ENCODE measurements at regions of chr7 and their contacts with region 1.

Region 1: DNA sequence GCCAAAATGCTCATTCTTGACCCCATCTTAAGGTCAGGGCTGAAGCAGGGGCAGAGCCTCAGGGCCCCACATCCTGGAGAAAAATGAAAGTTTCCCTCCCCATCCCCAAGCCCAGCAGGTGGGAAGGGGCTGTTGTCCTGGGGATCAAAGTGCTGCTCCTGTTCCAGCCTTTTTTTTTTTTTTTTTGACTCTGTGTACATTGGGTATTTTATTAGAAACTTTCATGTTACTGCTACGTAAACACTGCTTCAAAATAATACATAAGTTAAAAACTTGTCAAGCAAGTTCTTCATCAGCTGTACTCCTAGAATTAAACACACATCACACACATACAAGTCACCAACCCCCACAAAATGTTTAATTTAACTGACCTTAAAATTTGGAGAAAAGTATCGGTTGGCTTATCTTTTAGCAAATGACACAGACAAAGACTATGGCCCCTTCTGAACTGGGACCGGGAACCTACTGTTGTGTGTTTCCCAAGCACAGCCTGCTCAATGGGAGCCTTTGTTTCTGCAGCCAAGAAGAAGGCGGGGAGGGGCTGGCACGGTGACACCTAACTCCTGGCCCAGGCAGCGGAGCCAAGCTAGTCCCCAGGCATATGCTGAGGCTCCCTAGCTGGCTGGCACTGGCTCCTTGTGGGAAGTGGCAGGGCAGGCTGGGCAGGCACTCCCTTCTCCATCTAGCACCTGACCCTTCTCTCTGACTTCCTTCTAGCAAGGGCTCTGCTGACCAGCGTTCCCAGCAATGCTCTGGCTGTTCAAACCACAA is 325.2 kb downstream of the PLXNA4 start:
- DNase-seq: peak; percentile 50 to 90 (median 80)
- H3K4me3 ChIP-seq: peak overlapping the region in 4 of 59 donors; percentile 1 to 40 (median 11)
- H3K27ac ChIP-seq: peak overlapping the region in 10 of 59 donors; percentile 11 to 59 (median 28)
- H3K27me3 ChIP-seq: no peaks in the 10 kb centered on the region
- CTCF ChIP-seq: peak in 2 of 56 donors; percentile 8 to 22

Region 2: DNA sequence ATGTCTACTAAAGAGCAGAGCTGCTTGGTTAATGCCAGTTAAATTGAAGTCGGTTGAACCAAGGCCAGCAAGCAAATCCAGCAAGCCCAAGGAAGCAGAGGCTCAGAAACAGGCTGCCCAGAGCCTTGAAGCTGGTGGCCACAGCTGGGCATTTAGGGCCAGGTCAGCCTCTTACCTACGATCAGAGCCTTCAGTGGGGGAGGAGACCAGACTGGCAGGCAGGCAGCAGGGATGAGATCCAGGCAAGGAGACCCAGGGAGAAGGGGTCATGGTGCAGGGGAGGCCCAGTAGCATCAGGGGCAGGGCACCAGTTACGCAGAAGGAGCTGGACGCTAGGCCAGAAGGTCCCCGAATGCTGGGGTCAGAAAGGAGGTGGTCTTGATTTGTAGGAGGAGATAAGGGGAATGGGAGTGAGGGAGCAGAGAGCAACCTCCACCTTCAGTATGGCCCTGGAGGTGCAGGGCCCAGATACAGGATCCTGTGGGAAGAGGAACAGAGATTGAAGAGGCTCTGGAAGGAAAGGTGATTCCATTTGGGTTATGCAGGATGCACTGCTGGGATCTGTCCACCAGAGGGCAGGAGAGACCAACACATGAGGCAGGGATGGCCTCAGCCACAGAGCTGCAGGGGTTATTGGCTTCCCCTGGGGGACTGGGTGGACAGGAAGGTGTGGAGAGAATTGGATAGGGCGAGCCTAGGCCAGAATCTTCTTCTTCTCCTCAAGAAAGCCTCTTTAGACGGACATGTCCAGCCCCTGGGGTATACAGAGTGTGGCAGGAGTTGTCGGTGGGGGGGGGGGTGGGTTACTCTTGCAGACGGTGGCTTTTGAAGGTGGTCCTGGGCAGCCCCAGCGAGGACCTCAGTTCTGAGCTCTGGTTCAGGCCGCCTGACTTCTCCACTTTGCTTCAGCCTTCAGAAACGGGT is 562.1 kb before region 1 on chr7:
- intact Hi-C with region 1: loop called in 1 of 2 experiments (anchors 5 kb)
- DNase-seq: peak in 9 of 10 donors; percentile 54 to 78 (median 68)
- H3K4me3 ChIP-seq: no peak overlapping the region
- H3K27ac ChIP-seq: no peak overlapping the region
- H3K27me3 ChIP-seq: peaks cover 0 to 20% (median 0%) of the 10 kb centered on the region in 45 donors
- CTCF ChIP-seq: peak; percentile 80 to 98 (median 95)

Region 3: DNA sequence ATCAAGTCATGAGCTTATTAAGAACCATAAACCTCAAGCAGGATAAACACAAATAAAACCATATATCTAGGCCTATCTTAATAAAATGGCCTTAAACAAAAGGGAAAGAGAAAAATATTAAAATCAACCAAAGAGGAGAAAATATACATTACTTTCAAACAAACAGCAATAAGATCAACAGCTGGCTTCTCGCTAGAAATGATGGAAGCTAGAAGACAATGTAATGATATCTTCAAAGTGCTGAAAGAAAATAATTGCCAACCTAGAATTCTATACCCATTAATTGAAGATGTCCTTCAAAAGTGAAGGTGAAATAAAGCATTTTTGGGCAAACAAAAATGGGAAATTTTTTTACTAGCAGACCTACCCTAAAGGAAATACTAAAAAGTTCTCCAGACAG is 551.7 kb before region 1 on chr7:
- intact Hi-C with region 1: no loop called
- DNase-seq: no peak
- H3K4me3 ChIP-seq: no peak overlapping the region
- H3K27ac ChIP-seq: no peak overlapping the region
- H3K27me3 ChIP-seq: peaks cover 0 to 4% (median 0%) of the 10 kb centered on the region in 45 donors
- CTCF ChIP-seq: no peak

Region 4: GRCh38 chr7:131859147-131859821 is 391.8 kb before region 1 on chr7:
- intact Hi-C with region 1: loop called in 1 of 2 experiments (anchors 10 kb)
- DNase-seq: peak; percentile 41 to 82 (median 74)
- H3K4me3 ChIP-seq: peak overlapping the region in 1 of 59 donors; percentile 26
- H3K27ac ChIP-seq: no peak overlapping the region
- H3K27me3 ChIP-seq: no peaks in the 10 kb centered on the region
- CTCF ChIP-seq: peak; percentile 37 to 87 (median 78)

Region 5: DNA sequence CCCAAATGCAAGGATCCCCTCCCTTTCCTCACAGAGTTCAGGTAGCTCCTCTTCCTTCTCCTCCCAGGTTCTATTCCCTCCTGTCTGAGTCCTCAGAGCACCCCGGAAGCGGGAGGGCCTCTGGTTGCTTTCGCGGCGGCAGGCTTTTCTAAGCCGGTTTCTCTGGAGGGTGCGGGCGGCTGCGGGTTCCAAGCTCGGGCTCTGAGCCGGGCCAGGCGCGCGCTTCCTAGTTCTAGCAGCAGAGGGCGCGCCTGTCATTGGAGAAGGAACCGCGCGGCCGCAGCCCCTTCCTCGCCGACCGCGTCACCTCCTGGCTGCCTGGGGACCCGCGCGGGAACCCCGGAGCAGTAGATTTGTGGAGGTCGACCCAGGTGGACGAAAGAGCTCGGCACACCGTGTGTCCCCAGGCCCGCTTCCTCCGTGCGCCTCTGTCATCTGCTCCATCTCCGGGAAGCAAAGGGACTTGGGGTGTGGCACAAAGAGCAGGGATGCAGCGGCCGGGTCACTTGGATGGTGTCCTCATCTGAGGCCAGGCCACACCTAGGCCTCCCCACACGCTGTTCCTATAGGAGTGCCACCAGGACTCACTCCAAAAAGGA is 305.7 kb before region 1 on chr7:
- intact Hi-C with region 1: loop called (anchors 1 to 5 kb)
- DNase-seq: peak; percentile 40 to 76 (median 61)
- H3K4me3 ChIP-seq: peak overlapping the region; percentile 5 to 66 (median 48)
- H3K27ac ChIP-seq: peak overlapping the region in 2 of 59 donors; percentile 46 to 61
- H3K27me3 ChIP-seq: peaks cover 0 to 18% (median 0%) of the 10 kb centered on the region in 45 donors
- CTCF ChIP-seq: peak; percentile 53 to 94 (median 87)

Region 6: DNA sequence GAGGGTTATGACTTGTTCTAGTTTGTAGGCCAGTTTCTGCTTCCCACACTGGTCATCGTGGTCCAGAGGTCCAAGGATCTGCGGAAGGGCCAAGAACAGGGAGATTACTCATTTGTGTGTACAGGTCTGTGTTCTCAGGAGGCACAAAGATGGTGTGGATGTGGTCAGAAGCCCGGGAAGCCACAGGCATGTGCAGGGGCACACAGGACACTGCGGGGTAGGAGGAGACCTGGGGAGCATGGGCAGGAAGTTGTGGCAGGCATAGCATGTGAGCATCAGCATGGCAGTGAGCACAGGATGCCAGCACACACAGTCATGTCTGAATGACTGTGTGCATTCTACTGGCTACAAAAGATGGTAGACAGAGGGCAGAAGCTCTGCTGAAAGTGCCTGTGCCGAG is 120.6 kb before region 1 on chr7:
- intact Hi-C with region 1: no loop called
- DNase-seq: no peak
- H3K4me3 ChIP-seq: no peak overlapping the region
- H3K27ac ChIP-seq: no peak overlapping the region
- H3K27me3 ChIP-seq: no peaks in the 10 kb centered on the region
- CTCF ChIP-seq: no peak

Region 7: GRCh38 chr7:132569884-132570614 is 319.0 kb after region 1 on chr7:
- intact Hi-C with region 1: no loop called
- DNase-seq: no peak
- H3K4me3 ChIP-seq: no peak overlapping the region
- H3K27ac ChIP-seq: no peak overlapping the region
- H3K27me3 ChIP-seq: peaks cover 0 to 58% (median 18%) of the 10 kb centered on the region in 45 donors
- CTCF ChIP-seq: no peak